ENCODE measurements at regions of chr1 and their contacts with region 1.

Region 1: GRCh38 chr1:181189691-181190363 is 101.3 kb downstream of the IER5 start:
- DNase-seq: peak; percentile 49 to 95 (median 79)
- ATAC-seq: peak; percentile 88
- H3K4me3 ChIP-seq: no peak overlapping the region
- H3K4me3 Mint-ChIP-seq: peak overlapping the region in 8 of 10 donors; percentile 22 to 77 (median 55)
- H3K27ac ChIP-seq: no peak overlapping the region
- H3K27ac Mint-ChIP-seq: no peak overlapping the region
- H3K4me1 ChIP-seq: peaks cover 0 to 4% of the 10 kb centered on the region in 2 donors
- H3K4me1 Mint-ChIP-seq: peaks cover 0 to 13% (median 6%) of the 10 kb centered on the region in 7 donors
- H3K27me3 ChIP-seq: no peaks in the 10 kb centered on the region
- H3K27me3 Mint-ChIP-seq: peaks cover 0 to 22% (median 11%) of the 10 kb centered on the region in 5 donors

Region 2: GRCh38 chr1:181312946-181313345 is 123.1 kb after region 1 on chr1:
- CTCF ChIA-PET with region 1: no interaction called
- POLR2A ChIA-PET with region 1: no interaction called
- intact Hi-C with region 1: loop called in 1 of 2 experiments (anchors 1 kb)
- DNase-seq: no peak
- ATAC-seq: no peak
- H3K4me3 ChIP-seq: no peak overlapping the region
- H3K4me3 Mint-ChIP-seq: no peak overlapping the region
- H3K27ac ChIP-seq: no peak overlapping the region
- H3K27ac Mint-ChIP-seq: no peak overlapping the region
- H3K4me1 ChIP-seq: peaks cover 0 to 2% of the 10 kb centered on the region in 2 donors
- H3K4me1 Mint-ChIP-seq: peaks cover 10 to 27% (median 16%) of the 10 kb centered on the region in 7 donors
- H3K27me3 ChIP-seq: peaks cover 0 to 24% of the 10 kb centered on the region in 2 donors
- H3K27me3 Mint-ChIP-seq: peaks cover 45 to 58% (median 48%) of the 10 kb centered on the region in 5 donors

Region 3: GRCh38 chr1:181417915-181418314 is 228.1 kb after region 1 on chr1:
- CTCF ChIA-PET with region 1: interaction called, 53 read pairs
- POLR2A ChIA-PET with region 1: no interaction called
- intact Hi-C with region 1: no loop called
- DNase-seq: no peak
- ATAC-seq: no peak
- H3K4me3 ChIP-seq: no peak overlapping the region
- H3K4me3 Mint-ChIP-seq: no peak overlapping the region
- H3K27ac ChIP-seq: no peak overlapping the region
- H3K27ac Mint-ChIP-seq: no peak overlapping the region
- H3K4me1 ChIP-seq: no peaks in the 10 kb centered on the region
- H3K4me1 Mint-ChIP-seq: no peaks in the 10 kb centered on the region
- H3K27me3 ChIP-seq: no peaks in the 10 kb centered on the region
- H3K27me3 Mint-ChIP-seq: no peaks in the 10 kb centered on the region

Region 4: DNA sequence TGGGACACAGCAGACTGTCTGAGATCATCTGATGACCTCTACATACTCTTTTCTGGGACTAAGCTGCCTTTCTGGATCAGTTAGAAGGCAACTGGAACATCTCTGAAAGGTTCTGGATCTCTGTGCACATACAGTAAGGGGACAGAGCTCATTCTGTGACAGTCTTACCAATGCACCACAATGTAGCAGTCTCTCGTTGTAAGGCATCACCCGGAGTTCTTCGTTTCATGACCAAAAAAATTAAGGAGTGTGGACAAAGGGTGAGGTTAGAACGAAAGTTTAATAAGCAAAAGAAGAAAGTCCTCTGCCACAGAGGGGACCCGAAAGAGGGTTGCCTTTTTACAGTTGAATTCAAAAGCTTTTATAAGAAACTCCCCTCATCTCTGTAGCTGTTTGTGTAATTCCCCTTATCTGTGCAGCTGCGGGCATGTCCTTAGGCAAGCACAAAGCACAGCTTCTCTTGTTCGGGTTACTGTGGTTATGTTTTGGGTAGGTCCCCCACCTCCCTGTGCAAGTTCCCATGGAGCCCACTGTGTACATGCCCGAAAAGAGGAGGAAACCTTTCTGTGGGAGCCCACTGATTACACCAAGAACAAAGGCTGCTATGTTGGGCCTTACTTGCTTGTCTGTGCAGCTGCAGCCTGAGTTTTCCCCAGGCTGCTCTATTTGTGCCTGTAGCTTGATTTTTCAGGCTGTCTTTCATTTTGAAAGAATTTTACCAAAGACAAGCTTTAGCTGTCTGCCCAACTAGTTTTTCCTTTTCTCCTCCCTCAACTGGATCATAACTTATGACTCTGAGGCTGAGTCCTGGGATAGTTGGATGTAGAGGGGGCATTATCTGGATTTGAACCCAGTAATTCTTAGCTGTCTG is 240.4 kb after region 1 on chr1:
- CTCF ChIA-PET with region 1: interaction called, 90 read pairs
- POLR2A ChIA-PET with region 1: interaction called, 8 read pairs
- intact Hi-C with region 1: loop called (anchors 1 kb)
- DNase-seq: no peak
- ATAC-seq: peak; percentile 81
- H3K4me3 ChIP-seq: no peak overlapping the region
- H3K4me3 Mint-ChIP-seq: no peak overlapping the region
- H3K27ac ChIP-seq: no peak overlapping the region
- H3K27ac Mint-ChIP-seq: peak overlapping the region in 1 of 9 donors; percentile 38
- H3K4me1 ChIP-seq: no peaks in the 10 kb centered on the region
- H3K4me1 Mint-ChIP-seq: peaks cover 0 to 3% (median 0%) of the 10 kb centered on the region in 7 donors
- H3K27me3 ChIP-seq: no peaks in the 10 kb centered on the region
- H3K27me3 Mint-ChIP-seq: peaks cover 20 to 42% (median 34%) of the 10 kb centered on the region in 5 donors

Region 5: GRCh38 chr1:181936768-181937581 is 747.1 kb after region 1 on chr1:
- CTCF ChIA-PET with region 1: no interaction called
- POLR2A ChIA-PET with region 1: no interaction called
- intact Hi-C with region 1: loop called in 1 of 2 experiments (anchors 2 kb)
- DNase-seq: peak in 8 of 9 donors; percentile 13 to 50 (median 26)
- ATAC-seq: peak; percentile 69
- H3K4me3 ChIP-seq: no peak overlapping the region
- H3K4me3 Mint-ChIP-seq: peak overlapping the region in 5 of 10 donors; percentile 33 to 69 (median 40)
- H3K27ac ChIP-seq: no peak overlapping the region
- H3K27ac Mint-ChIP-seq: no peak overlapping the region
- H3K4me1 ChIP-seq: no peaks in the 10 kb centered on the region
- H3K4me1 Mint-ChIP-seq: peaks cover 0 to 5% (median 0%) of the 10 kb centered on the region in 7 donors
- H3K27me3 ChIP-seq: no peaks in the 10 kb centered on the region
- H3K27me3 Mint-ChIP-seq: peaks cover 0 to 5% (median 0%) of the 10 kb centered on the region in 5 donors